ENCODE measurements at regions of chr3 and their contacts with region 1.

Region 1: GRCh38 chr3:71087143-71088018 is 496.1 kb downstream of the FOXP1 start:
- DNase-seq: peak; percentile 44
- H3K4me3 Mint-ChIP-seq: peak overlapping the region; percentile 46
- H3K27ac Mint-ChIP-seq: peak overlapping the region; percentile 89
- H3K4me1 Mint-ChIP-seq: peaks cover 77% of the 10 kb centered on the region
- H3K27me3 Mint-ChIP-seq: peaks cover 2% of the 10 kb centered on the region

Region 2: GRCh38 chr3:70856414-70857162 is 230.8 kb before region 1 on chr3:
- intact Hi-C with region 1: loop called (anchors 1 kb)
- DNase-seq: no peak
- H3K4me3 Mint-ChIP-seq: no peak overlapping the region
- H3K27ac Mint-ChIP-seq: peak overlapping the region; percentile 49
- H3K4me1 Mint-ChIP-seq: peaks cover 22% of the 10 kb centered on the region
- H3K27me3 Mint-ChIP-seq: peaks cover 6% of the 10 kb centered on the region

Region 3: DNA sequence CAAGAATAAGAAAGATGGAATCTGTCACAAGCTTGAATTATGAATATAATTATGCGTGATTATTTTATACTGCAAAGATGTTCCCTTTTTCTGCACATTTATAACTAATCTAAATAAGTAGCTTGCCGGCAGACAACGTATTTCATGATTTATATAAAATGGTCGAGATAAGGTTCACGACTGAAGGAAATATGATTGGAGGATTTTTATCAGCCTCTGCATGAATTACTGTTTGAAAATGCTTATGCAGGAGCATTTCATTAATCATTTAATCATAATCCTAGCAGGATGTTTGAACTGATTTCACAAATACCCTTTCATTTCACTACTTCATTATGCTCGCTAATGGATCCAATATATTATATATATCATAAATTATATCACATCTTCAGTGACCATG is 83.9 kb before region 1 on chr3:
- intact Hi-C with region 1: no loop called
- DNase-seq: no peak
- H3K4me3 Mint-ChIP-seq: no peak overlapping the region
- H3K27ac Mint-ChIP-seq: no peak overlapping the region
- H3K4me1 Mint-ChIP-seq: peaks cover 39% of the 10 kb centered on the region
- H3K27me3 Mint-ChIP-seq: no peaks in the 10 kb centered on the region

Region 4: DNA sequence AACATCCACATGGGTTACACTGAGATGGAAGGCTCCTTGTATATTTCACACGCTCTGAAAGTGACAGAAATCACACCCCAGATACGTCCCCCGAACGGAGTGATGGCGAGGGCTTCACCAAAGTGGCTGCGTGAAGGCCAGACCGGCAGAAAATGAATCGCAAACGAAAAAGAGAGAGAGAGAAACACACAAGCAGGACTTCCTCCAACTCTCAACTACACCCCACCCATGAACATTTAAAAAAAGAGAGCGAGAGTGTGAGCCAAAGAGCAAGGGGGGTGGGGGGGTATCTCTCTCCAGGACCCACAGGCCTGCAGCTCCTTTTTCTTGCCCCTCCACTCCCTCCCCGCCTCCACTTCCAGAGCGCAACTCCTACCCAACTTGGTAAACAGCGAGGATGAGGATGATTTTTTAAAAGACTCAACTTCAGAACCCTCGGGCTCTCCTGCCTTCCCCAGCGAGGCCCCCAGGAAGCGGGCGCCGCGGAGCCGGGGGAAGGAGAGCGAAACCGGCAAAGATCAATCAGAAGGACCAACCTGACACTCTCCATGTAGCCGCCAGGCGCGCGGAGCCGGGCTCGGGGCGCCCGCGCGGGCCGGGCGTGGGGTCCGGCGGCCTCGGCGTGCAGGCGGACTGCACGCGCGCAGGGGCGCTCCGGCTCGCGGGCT is 23.0 kb before region 1 on chr3:
- intact Hi-C with region 1: loop called (anchors 1 kb)
- DNase-seq: peak; percentile 59
- H3K4me3 Mint-ChIP-seq: no peak overlapping the region
- H3K27ac Mint-ChIP-seq: no peak overlapping the region
- H3K4me1 Mint-ChIP-seq: peaks cover 39% of the 10 kb centered on the region
- H3K27me3 Mint-ChIP-seq: no peaks in the 10 kb centered on the region

Region 5: GRCh38 chr3:71130471-71131374 is 43.3 kb after region 1 on chr3:
- intact Hi-C with region 1: loop called (anchors 1 kb)
- DNase-seq: peak; percentile 67
- H3K4me3 Mint-ChIP-seq: peak overlapping the region; percentile 89
- H3K27ac Mint-ChIP-seq: peak overlapping the region; percentile 93
- H3K4me1 Mint-ChIP-seq: peaks cover 65% of the 10 kb centered on the region
- H3K27me3 Mint-ChIP-seq: no peaks in the 10 kb centered on the region

Region 6: GRCh38 chr3:71389911-71390573 is 302.7 kb after region 1 on chr3:
- intact Hi-C with region 1: loop called (anchors 1 kb)
- DNase-seq: no peak
- H3K4me3 Mint-ChIP-seq: peak overlapping the region; percentile 10
- H3K27ac Mint-ChIP-seq: peak overlapping the region; percentile 27
- H3K4me1 Mint-ChIP-seq: peaks cover 33% of the 10 kb centered on the region
- H3K27me3 Mint-ChIP-seq: peaks cover 18% of the 10 kb centered on the region

Region 7: GRCh38 chr3:71444028-71444860 is 356.9 kb after region 1 on chr3:
- intact Hi-C with region 1: loop called (anchors 1 kb)
- DNase-seq: peak; percentile 71
- H3K4me3 Mint-ChIP-seq: peak overlapping the region; percentile 74
- H3K27ac Mint-ChIP-seq: peak overlapping the region; percentile 95
- H3K4me1 Mint-ChIP-seq: peaks cover 73% of the 10 kb centered on the region
- H3K27me3 Mint-ChIP-seq: peaks cover 8% of the 10 kb centered on the region